AG04449 (cell line): ENCODE measurements at regions of chr1 and their contacts with region 1.

Region 1: DNA sequence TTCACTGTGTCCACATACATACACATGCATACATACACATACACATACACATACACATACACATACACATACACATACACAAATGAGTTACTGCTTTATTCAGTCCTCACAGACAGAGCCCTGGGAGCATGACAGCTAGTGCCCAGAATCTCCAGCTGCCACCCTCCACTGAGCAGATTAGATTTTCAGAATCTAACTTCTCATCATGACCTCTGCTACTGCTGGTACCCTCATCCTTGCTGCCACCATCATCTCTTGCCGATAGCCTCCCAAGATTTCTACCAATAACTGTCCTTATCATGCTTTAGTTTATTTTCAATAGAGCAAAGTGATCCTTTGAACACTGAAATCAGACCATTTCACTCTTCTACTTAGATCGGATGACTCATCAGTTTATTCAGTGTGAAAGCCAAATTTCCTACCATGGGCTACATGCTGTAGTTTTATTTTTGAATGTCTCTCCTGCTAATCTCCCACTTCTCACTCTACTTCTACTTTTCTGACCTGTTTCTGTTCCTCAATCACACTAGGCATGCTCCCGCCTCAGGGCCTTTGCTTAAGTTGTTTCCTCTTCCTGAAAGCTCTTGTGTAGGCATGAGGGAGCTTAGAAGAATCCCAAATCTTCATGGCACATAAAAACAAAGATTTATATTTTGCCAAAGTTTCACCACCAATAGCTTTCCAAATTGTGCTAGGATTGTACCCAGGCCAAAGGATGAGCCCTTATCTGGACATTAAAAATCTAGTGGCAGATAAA is 43.0 kb downstream of the ATP6V1G3 start:
- DNase-seq: no peak
- H3K4me3 ChIP-seq: no peak overlapping the region
- CTCF ChIP-seq: no peak

Region 2: GRCh38 chr1:198481661-198482060 is 15.9 kb before region 1 on chr1:
- CTCF ChIA-PET with region 1: no interaction called
- POLR2A ChIA-PET with region 1: no interaction called
- DNase-seq: no peak
- H3K4me3 ChIP-seq: no peak overlapping the region
- CTCF ChIP-seq: no peak

Region 3: DNA sequence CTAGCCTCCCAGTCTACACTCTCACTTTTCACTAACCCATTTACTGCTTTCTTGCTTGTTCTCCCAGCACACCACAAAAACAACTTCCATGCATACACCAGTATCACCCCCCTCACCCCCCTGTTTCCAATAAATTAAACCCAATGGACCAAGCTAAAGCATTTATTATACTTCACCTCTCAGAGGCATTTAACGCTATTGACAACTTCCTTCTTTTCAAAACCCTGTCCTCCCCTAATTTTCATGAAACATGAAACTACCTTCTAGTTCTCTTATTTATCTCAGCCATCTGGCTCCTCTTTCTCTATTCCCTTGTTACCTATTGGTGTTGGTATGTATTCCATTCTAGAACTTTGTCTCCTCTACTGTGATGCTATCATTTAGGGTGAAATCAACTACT is 173.6 kb after region 1 on chr1:
- CTCF ChIA-PET with region 1: no interaction called
- POLR2A ChIA-PET with region 1: interaction called, 18 read pairs
- DNase-seq: no peak
- H3K4me3 ChIP-seq: no peak overlapping the region
- CTCF ChIP-seq: no peak

Region 4: GRCh38 chr1:198681831-198682759 is 184.6 kb after region 1 on chr1:
- CTCF ChIA-PET with region 1: interaction called, 7 read pairs
- POLR2A ChIA-PET with region 1: interaction called, 15 read pairs
- DNase-seq: peak; percentile 91
- H3K4me3 ChIP-seq: no peak overlapping the region
- CTCF ChIP-seq: no peak